AG04450 (cell line): ENCODE measurements at regions of chr11 and their contacts with region 1.

Region 1: GRCh38 chr11:131748151-131749050 is 378.0 kb downstream of the NTM start:
- DNase-seq: no peak
- H3K4me3 ChIP-seq: no peak overlapping the region
- H3K27ac ChIP-seq: peak overlapping the region; percentile 77
- H3K27me3 ChIP-seq: no peaks in the 10 kb centered on the region
- CTCF ChIP-seq: peak; percentile 90

Region 2: DNA sequence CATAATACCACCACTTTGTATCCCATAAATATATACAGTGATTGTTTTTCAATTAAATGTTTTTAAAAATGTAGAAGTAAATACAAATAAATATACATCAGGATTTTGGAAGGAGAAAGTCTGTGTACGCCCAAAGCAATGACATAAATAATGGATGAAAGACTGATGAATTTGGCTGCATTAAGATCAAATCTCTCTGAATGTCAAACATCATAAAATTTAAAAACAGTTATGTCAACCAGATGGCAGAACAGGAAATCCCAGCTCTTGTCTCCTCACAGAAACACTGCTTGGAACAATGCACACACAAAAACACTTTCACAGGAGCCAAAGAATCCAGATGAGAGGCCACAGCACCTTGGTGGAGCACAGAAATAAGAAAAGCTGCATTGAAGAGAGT is 45.1 kb before region 1 on chr11:
- CTCF ChIA-PET with region 1: interaction called, 12 read pairs
- POLR2A ChIA-PET with region 1: no interaction called
- DNase-seq: no peak
- H3K4me3 ChIP-seq: no peak overlapping the region
- H3K27ac ChIP-seq: no peak overlapping the region
- H3K27me3 ChIP-seq: peaks cover 3% of the 10 kb centered on the region
- CTCF ChIP-seq: no peak

Region 3: DNA sequence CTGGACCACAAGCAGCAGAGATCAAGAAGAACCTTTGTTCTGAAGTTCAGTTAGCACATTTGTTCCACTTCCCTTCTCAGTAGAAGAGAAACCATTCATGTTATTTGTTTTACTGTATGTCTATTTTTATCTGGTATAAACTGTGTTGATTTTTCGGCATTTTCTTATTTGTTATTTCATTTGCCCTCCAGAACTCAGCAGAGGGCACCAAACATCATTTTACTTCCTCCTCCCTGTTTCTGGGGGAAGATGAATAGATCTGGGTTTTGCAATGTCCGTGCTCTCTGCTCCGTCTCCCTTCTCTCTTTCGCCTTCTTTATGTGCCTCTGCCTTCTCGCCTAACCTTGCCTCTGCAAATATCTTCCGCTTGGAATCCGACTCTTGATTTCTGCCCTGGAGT is 11.0 kb before region 1 on chr11:
- CTCF ChIA-PET with region 1: interaction called, 63 read pairs
- POLR2A ChIA-PET with region 1: no interaction called
- DNase-seq: no peak
- H3K4me3 ChIP-seq: no peak overlapping the region
- H3K27ac ChIP-seq: no peak overlapping the region
- H3K27me3 ChIP-seq: peaks cover 9% of the 10 kb centered on the region
- CTCF ChIP-seq: no peak

Region 4: GRCh38 chr11:131770801-131771200 is 22.4 kb after region 1 on chr11:
- CTCF ChIA-PET with region 1: interaction called, 45 read pairs
- POLR2A ChIA-PET with region 1: no interaction called
- DNase-seq: no peak
- H3K4me3 ChIP-seq: no peak overlapping the region
- H3K27ac ChIP-seq: no peak overlapping the region
- H3K27me3 ChIP-seq: no peaks in the 10 kb centered on the region
- CTCF ChIP-seq: no peak